ENCODE measurements at regions of chr12 and their contacts with region 1.

Region 1: DNA sequence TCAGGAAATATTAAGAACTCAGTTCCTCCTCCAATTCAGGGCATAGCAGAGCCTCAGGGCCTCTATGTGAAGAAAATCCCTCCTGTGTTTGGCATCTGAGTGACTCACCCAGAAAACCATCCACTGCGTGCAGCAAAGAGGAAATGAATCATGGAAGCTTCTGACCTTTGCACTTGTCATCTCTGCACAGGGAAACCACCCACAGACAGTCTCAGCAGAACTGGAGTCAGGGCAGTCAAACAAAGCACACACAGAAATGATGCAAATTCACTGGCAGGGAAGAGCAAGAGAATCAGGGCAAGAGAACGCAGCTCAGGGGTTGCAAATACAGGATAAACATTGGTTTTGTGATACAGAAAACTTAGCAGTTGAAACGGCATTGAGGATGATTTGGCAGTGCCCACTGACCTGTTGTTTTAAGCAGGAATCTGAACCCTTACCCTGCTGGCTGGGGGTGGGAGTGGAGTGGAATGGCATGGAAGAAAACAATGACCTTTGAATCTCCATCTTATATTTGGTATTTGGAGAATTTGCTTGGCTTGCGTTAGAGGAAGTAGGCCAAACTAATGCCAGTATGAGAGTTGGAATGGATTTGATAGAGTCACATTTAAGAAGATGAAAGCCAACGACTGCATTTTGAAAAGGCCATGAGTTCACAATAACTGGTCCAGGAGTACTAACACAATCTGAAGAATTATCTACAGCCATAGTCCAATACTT is 53.5 kb downstream of the PHLDA1 start:
- DNase-seq: peak; percentile 100
- ATAC-seq: peak; percentile 94
- H3K4me3 ChIP-seq: peak overlapping the region; percentile 7 to 51 (median 15); a peak in 3 of 6 replicates
- H3K27ac ChIP-seq: peak overlapping the region; percentile 91
- H3K4me1 ChIP-seq: peaks cover 85% of the 10 kb centered on the region
- H3K27me3 ChIP-seq: no peaks in the 10 kb centered on the region
- CTCF ChIP-seq: no peak
- EP300 ChIP-seq: peak; percentile 96 to 98
- POLR2A ChIP-seq: peak in 1 of 2 experiments; percentile 41; a peak in 3 of 4 replicates
- RAD21 ChIP-seq: peak; percentile 67; the same call in 1 of the 2 replicates

Region 2: DNA sequence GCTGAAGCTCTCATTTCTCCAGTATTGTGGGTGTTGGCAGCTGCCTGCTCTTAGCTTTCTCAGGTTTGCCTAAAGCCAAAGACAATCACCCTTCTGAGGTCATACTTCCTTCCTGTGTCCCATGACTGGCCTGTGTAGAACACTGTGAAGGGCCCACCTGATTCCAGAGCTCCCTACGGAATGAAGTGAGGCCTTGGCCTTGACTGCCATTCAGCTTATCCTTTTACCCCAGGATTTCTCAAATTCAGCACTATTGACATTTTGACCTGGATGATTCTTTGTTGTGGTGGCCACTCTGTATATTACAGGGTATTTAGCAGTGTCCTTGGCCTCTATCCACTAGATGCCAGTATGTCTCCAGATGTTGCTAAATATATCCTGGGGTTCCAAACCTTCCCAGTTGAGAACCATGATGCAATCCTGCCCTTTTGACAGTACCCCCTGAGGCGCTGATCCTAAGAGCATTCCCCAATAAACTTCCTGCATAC is 354.4 kb before region 1 on chr12:
- CTCF ChIA-PET with region 1: interaction called, 3 read pairs
- POLR2A ChIA-PET with region 1: interaction called, 7 read pairs
- in situ Hi-C with region 1: no loop called
- intact Hi-C with region 1: loop called (anchors 1 kb)
- DNase-seq: peak; percentile 87
- ATAC-seq: peak; percentile 99
- H3K4me3 ChIP-seq: no peak overlapping the region; a peak in 1 of 6 replicates
- H3K27ac ChIP-seq: no peak overlapping the region
- H3K4me1 ChIP-seq: peaks cover 40% of the 10 kb centered on the region
- H3K27me3 ChIP-seq: no peaks in the 10 kb centered on the region
- CTCF ChIP-seq: peak; percentile 82
- EP300 ChIP-seq: peak in 1 of 2 experiments; percentile 91; a peak in 2 of 4 replicates
- POLR2A ChIP-seq: no peak
- RAD21 ChIP-seq: peak; percentile 87

Region 3: DNA sequence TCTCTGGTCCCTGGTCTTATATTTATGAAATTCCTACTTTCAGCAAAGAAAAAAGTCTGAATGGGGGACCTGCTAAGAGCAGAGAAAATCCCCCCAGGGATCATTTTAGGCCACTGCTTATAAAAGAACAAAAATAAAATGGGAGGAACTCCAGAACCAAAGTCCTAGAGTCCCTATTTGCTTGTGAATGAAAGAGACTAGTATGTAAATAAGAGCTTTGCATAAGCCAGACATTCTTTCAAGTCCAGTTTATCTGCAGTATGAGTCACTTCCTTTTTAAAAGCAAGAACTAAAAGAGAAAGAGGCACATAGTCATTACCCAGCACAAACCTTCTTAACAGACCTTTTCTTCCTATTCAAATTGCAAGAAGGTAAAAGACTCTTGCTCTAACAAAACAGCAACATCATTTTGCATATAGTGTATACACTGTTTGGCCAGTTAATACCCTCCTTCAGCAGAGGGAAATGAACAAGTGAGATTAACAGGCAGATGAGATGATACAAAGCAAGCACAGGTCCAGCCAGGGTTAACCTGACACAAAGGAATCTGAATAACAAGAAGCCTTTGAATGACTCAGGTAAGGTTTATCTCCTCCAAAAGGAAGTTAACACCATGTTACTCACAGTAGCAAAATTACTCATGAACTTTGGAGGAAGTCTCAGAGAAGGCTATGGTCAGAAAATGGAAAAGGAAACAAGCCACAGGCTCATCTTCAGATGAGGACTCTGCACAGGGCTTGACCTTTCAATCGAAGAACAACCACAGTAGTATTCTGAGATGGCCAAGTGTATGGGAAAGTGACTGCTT is 33.8 kb before region 1 on chr12:
- CTCF ChIA-PET with region 1: no interaction called
- POLR2A ChIA-PET with region 1: interaction called, 20 read pairs
- in situ Hi-C with region 1: no loop called
- intact Hi-C with region 1: loop called (anchors 1 kb)
- DNase-seq: peak; percentile 97
- ATAC-seq: peak; percentile 96
- H3K4me3 ChIP-seq: peak overlapping the region in 2 of 3 experiments; percentile 1 to 32; a peak in 2 of 6 replicates
- H3K27ac ChIP-seq: peak overlapping the region; percentile 96
- H3K4me1 ChIP-seq: peaks cover 54% of the 10 kb centered on the region
- H3K27me3 ChIP-seq: no peaks in the 10 kb centered on the region
- CTCF ChIP-seq: no peak
- EP300 ChIP-seq: peak; percentile 97 to 99
- POLR2A ChIP-seq: no peak; a peak in 1 of 4 replicates
- RAD21 ChIP-seq: no peak

Region 4: GRCh38 chr12:75994186-75994731 is 16.1 kb after region 1 on chr12:
- CTCF ChIA-PET with region 1: no interaction called
- POLR2A ChIA-PET with region 1: interaction called, 34 read pairs
- in situ Hi-C with region 1: no loop called
- intact Hi-C with region 1: no loop called
- DNase-seq: no peak
- ATAC-seq: no peak
- H3K4me3 ChIP-seq: no peak overlapping the region
- H3K27ac ChIP-seq: no peak overlapping the region
- H3K4me1 ChIP-seq: peaks cover 44% of the 10 kb centered on the region
- H3K27me3 ChIP-seq: no peaks in the 10 kb centered on the region
- CTCF ChIP-seq: no peak
- EP300 ChIP-seq: no peak
- POLR2A ChIP-seq: no peak
- RAD21 ChIP-seq: no peak